PC-9 (cell line): ENCODE measurements at regions of chr16 and their contacts with region 1.

Region 1: GRCh38 chr16:30698139-30698815 is 694 bp upstream of the SRCAP start:
- DNase-seq: peak; percentile 91 to 99
- H3K4me3 ChIP-seq: peak overlapping the region; percentile 96
- H3K27ac ChIP-seq: peak overlapping the region; percentile 95
- H3K4me1 ChIP-seq: peaks cover 22% of the 10 kb centered on the region
- H3K27me3 ChIP-seq: no peaks in the 10 kb centered on the region
- CTCF ChIP-seq: no peak

Region 2: GRCh38 chr16:30677931-30678585 is 20.2 kb before region 1 on chr16:
- CTCF ChIA-PET with region 1: no interaction called
- POLR2A ChIA-PET with region 1: interaction called, 21 read pairs
- intact Hi-C with region 1: no loop called
- DNase-seq: no peak
- H3K4me3 ChIP-seq: no peak overlapping the region
- H3K27ac ChIP-seq: no peak overlapping the region
- H3K4me1 ChIP-seq: no peaks in the 10 kb centered on the region
- H3K27me3 ChIP-seq: no peaks in the 10 kb centered on the region
- CTCF ChIP-seq: no peak

Region 3: GRCh38 chr16:30711712-30712111 is 13.4 kb after region 1 on chr16:
- CTCF ChIA-PET with region 1: no interaction called
- POLR2A ChIA-PET with region 1: no interaction called
- intact Hi-C with region 1: loop called (anchors 2 kb)
- DNase-seq: no peak
- H3K4me3 ChIP-seq: no peak overlapping the region
- H3K27ac ChIP-seq: no peak overlapping the region
- H3K4me1 ChIP-seq: peaks cover 6% of the 10 kb centered on the region
- H3K27me3 ChIP-seq: no peaks in the 10 kb centered on the region
- CTCF ChIP-seq: no peak

Region 4: DNA sequence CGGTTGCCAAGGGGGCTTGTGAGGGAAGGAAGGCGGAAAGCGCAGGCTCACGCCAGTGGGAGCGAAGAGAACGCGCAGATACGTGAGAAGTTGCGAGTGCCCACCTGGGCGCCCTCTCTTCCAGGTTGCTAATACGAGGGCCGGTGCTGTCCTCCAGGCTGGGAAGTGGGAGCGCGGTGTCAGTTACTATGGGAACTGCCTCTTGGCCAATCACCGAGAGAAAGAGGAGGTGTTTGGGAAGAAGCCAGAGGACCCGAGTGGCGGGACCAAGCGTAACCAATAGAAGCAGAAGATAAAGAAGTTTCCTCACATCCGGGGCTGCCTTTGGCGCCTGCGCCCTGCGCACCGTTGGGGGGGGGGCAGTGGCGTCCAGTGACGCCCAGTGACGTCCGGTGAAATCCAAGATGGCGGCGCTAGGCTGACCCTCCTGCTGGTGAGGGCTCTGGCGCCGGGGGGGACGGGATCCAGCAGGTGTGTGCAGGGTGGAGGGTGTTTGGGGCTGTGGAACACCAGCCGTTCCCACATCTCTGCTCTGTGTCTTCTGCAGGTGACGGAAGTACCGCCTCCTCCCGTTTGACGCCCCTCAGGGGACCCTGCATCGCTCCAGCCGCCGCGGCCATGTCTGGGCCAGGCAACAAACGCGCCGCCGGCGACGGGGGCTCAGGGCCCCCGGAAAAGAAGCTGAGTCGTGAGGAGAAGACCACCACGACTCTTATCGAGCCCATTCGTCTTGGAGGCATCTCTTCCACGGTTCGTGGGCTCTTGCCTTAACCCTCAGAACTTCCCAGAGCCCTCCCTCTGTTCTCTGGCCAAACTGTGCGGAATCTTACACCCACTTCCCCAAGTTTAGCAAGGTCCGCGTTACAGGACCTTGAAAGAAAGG is 63.9 kb after region 1 on chr16 and contains the starts of genes CFAP119 and RNF40:
- CTCF ChIA-PET with region 1: no interaction called
- POLR2A ChIA-PET with region 1: no interaction called
- intact Hi-C with region 1: loop called (anchors 2 kb)
- DNase-seq: peak; percentile 96 to 99
- H3K4me3 ChIP-seq: peak within 1 kb of the TSS; percentile 83
- H3K27ac ChIP-seq: peak within 1 kb of the TSS; percentile 2; the same call in 1 of the 2 replicates
- H3K4me1 ChIP-seq: peaks cover 24% of the 10 kb centered on the region
- H3K27me3 ChIP-seq: no peaks in the 10 kb centered on the region
- CTCF ChIP-seq: no peak
- total RNA-seq, gene CFAP119: 17.9 and 19.9 TPM in 2 replicates
- total RNA-seq, gene RNF40: 149 and 178 TPM in 2 replicates

Region 5: DNA sequence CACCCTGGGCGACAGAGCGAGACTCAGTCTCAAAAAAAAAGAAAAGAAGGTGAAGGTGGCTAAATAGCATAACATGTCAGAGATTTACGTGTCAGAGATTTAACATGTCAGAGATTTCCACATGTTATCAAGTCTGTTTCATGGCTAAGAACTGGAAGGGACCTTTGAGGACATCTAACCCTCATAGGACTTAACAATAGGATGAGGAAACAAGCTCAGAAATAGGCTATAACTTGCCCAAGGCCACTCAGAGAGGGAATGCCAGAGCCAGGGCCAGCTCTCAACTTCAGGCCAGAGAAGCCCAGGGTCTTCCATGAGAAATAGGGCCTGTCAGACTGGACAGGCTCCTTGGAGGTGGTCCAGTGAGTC is 115.5 kb after region 1 on chr16:
- CTCF ChIA-PET with region 1: no interaction called
- POLR2A ChIA-PET with region 1: interaction called, 4 read pairs
- intact Hi-C with region 1: loop called (anchors 2 kb)
- DNase-seq: no peak
- H3K4me3 ChIP-seq: peak overlapping the region; percentile 53
- H3K27ac ChIP-seq: peak overlapping the region; percentile 16; the same call in 1 of the 2 replicates
- H3K4me1 ChIP-seq: peaks cover 9% of the 10 kb centered on the region
- H3K27me3 ChIP-seq: no peaks in the 10 kb centered on the region
- CTCF ChIP-seq: no peak

Region 6: GRCh38 chr16:31472709-31473203 is 774.5 kb after region 1 on chr16:
- CTCF ChIA-PET with region 1: no interaction called
- POLR2A ChIA-PET with region 1: no interaction called
- intact Hi-C with region 1: no loop called
- DNase-seq: peak; percentile 62 to 95
- H3K4me3 ChIP-seq: peak overlapping the region; percentile 60; the same call in 1 of the 2 replicates
- H3K27ac ChIP-seq: no peak overlapping the region
- H3K4me1 ChIP-seq: peaks cover 13% of the 10 kb centered on the region; the same call in 1 of the 2 replicates
- H3K27me3 ChIP-seq: no peaks in the 10 kb centered on the region
- CTCF ChIP-seq: peak; percentile 71